ENCODE measurements at regions of chr9 and their contacts with region 1.

Region 1: GRCh38 chr9:129014611-129015010 is 13.5 kb downstream of the SH3GLB2 start:
- DNase-seq: no peak
- ATAC-seq: no peak

Region 2: GRCh38 chr9:128845155-128845931 is 169.3 kb before region 1 on chr9:
- intact Hi-C with region 1: loop called in 1 of 2 experiments (anchors 5 kb)
- DNase-seq: no peak
- ATAC-seq: no peak

Measured in left cardiac atrium (tissue), 4 donors.